PC-3 (cell line): ENCODE measurements at regions of chr18 and their contacts with region 1.

Region 1: GRCh38 chr18:13216092-13216582 is 2.4 kb upstream of the LDLRAD4 start:
- DNase-seq: peak; percentile 68
- ATAC-seq: peak; percentile 89
- H3K4me3 ChIP-seq: no peak overlapping the region
- H3K27ac ChIP-seq: no peak overlapping the region
- H3K4me1 ChIP-seq: no peaks in the 10 kb centered on the region
- H3K27me3 ChIP-seq: peaks cover 90% of the 10 kb centered on the region
- CTCF ChIP-seq: peak; percentile 72

Region 2: GRCh38 chr18:13308369-13308768 is 92.2 kb after region 1 on chr18:
- CTCF ChIA-PET with region 1: no interaction called
- POLR2A ChIA-PET with region 1: no interaction called
- intact Hi-C with region 1: no loop called
- DNase-seq: no peak
- ATAC-seq: no peak
- H3K4me3 ChIP-seq: no peak overlapping the region
- H3K27ac ChIP-seq: no peak overlapping the region
- H3K4me1 ChIP-seq: no peaks in the 10 kb centered on the region
- H3K27me3 ChIP-seq: peaks cover 88% of the 10 kb centered on the region
- CTCF ChIP-seq: no peak

Region 3: DNA sequence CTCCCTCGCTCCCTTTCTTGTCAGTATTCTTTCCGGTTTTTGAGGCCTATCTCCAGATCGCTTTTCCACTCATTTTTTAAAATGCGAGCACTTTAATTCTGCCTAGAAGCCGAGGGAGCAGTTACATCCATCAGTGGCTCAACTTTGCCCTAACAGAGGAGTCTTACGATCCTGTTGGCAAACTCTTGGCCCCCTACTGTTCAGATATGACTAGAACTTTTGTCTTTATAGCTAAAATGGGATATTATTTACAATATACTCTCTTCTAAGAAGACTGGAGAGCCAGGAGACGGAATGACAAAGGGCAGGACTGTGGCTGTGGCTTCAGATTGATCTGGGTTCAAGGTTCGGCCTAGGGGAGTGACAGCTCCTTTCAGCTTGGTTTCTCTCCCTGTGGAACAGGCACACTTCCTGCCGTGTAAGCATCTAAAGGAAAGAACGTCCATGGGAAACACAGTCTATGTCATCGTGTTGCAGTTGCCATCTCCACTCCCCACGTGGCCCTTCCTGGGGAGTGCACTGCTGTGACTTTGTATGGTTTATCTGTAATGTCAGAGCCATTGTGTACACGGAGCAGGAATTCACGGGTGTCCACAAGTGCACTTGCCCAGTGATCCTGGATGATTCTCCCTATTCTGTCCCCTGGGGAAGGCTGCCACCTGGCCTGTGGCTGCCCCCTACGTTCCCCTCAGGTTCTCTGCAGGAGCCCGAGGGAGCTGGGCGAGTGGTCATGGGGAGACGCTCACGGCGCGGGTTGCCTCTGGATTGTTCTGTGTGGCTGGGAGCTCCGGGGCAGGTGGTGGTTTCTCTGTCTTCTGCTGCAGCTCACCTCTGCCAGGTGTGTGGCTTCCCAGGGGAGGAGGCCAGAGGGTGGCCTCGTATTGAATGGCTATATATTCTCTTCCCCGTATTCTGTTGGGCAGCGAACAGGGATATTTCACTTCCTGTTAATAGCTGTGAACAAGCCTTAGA is 224.4 kb after region 1 on chr18:
- CTCF ChIA-PET with region 1: interaction called, 10 read pairs
- POLR2A ChIA-PET with region 1: no interaction called
- intact Hi-C with region 1: no loop called
- DNase-seq: no peak
- ATAC-seq: peak; percentile 19; the same call in 1 of the 2 replicates
- H3K4me3 ChIP-seq: no peak overlapping the region
- H3K27ac ChIP-seq: no peak overlapping the region
- H3K4me1 ChIP-seq: peaks cover 9% of the 10 kb centered on the region; the same call in 1 of the 2 replicates
- H3K27me3 ChIP-seq: peaks cover 77% of the 10 kb centered on the region
- CTCF ChIP-seq: peak; percentile 42

Region 4: GRCh38 chr18:13530879-13531387 is 314.8 kb after region 1 on chr18:
- CTCF ChIA-PET with region 1: interaction called, 16 read pairs
- POLR2A ChIA-PET with region 1: no interaction called
- intact Hi-C with region 1: no loop called
- DNase-seq: peak; percentile 47
- ATAC-seq: peak; percentile 95
- H3K4me3 ChIP-seq: no peak overlapping the region
- H3K27ac ChIP-seq: no peak overlapping the region
- H3K4me1 ChIP-seq: no peaks in the 10 kb centered on the region
- H3K27me3 ChIP-seq: peaks cover 89% of the 10 kb centered on the region
- CTCF ChIP-seq: peak; percentile 57

Region 5: GRCh38 chr18:13800505-13801259 is 584.5 kb after region 1 on chr18:
- CTCF ChIA-PET with region 1: no interaction called
- POLR2A ChIA-PET with region 1: no interaction called
- intact Hi-C with region 1: loop called (anchors 5 kb)
- DNase-seq: peak; percentile 85
- ATAC-seq: peak; percentile 99
- H3K4me3 ChIP-seq: peak overlapping the region; percentile 65
- H3K27ac ChIP-seq: no peak overlapping the region
- H3K4me1 ChIP-seq: peaks cover 26% of the 10 kb centered on the region
- H3K27me3 ChIP-seq: peaks cover 4% of the 10 kb centered on the region
- CTCF ChIP-seq: peak; percentile 74